Heart right ventricle (tissue), 16 donors: ENCODE measurements at regions of chr19 and their contacts with region 1.

Region 1: DNA sequence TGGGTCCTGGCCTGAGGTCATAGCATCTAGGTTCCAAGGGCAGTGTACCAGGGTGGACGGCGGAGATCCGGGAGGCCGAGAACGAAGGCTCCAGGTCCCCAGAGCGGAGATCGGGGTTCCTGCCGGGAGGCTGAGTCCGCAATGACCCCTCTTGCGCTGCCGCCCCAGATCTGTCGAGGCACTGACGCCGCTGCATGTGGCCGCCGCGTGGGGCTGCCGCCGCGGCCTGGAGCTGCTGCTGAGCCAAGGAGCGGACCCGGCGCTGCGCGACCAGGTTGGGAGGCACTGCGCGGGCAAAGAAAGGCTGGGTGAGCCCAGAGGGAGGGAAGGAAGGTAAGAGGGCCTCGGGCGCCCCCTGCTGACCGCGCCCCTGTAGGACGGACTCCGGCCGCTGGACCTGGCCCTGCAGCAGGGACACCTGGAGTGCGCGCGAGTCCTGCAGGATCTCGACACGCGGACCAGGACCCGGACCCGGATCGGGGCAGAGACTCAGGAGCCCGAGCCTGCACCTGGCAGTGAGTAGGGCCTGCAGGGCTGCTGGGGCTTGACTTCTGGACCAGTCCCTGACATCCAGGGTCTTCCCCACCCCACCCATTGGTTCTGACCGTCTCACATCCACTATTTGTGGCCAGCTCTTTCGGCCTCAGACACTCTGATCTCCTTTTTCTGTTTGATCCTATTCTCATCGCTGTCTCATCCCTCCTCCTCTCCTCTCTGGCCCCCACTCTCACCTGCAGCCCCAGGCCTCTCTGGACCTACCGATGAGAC is 971 bp downstream of the ANKLE1 start:
- DNase-seq: peak; percentile 78 to 86
- ATAC-seq: peak; percentile 89 to 97 (median 94)
- H3K4me3 ChIP-seq: peak overlapping the region; percentile 6 to 56 (median 42)
- H3K27ac ChIP-seq: no peak overlapping the region
- H3K4me1 ChIP-seq: peaks cover 13 to 19% (median 16%) of the 10 kb centered on the region in 9 donors
- H3K27me3 ChIP-seq: peaks cover 11 to 21% (median 16%) of the 10 kb centered on the region in 7 donors
- CTCF ChIP-seq: peak; percentile 89 to 98 (median 95)

Region 2: GRCh38 chr19:17069218-17069617 is 213.5 kb before region 1 on chr19:
- intact Hi-C with region 1: loop called (anchors 1 to 5 kb)
- DNase-seq: no peak
- ATAC-seq: no peak
- H3K4me3 ChIP-seq: no peak overlapping the region
- H3K27ac ChIP-seq: no peak overlapping the region
- H3K4me1 ChIP-seq: peaks cover 0 to 30% (median 18%) of the 10 kb centered on the region in 9 donors
- H3K27me3 ChIP-seq: no peaks in the 10 kb centered on the region
- CTCF ChIP-seq: no peak

Region 3: DNA sequence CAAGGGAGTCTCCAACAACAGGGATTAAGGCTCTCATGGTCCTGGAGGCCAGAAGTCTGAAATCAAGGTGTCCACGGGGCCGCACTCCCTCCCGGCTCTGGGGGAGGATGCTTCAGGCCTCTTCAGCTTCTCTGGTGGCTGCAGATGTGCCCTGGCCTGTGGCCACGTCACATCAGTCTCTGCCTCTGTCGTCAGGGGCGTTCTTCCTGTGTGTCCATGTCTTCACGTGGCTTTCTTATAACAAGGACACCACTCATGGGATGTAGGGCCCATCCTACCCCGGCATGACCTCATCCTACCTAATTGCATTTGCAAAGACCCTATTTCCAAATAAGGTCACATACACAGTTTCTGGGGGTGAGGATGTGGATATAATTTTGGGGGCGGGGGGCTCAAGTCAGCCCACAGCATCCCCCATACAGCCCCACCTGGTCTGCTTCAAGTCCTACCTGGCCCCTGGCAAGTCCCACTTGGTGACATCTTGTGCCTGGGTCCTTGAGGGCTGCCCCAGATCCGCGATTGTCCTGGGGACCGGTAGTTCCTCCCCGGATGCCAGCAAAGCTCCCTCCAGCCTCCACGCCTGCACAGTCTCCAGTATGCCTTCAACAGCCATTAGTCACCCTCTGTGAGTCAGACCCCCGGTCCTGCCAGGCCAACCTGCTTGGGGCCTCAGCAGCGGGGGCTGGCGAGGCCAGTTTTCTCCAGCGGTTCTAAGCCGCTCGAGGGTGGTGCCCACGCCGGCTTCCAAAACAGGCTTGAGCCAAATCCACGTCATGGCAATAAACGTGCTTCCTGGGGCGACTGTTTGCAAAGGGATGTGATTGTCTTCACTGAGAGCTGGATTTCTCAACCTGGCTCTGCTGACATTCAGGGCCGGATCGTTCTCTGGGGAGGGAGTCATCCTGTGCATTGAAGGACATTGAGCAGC is 174.9 kb before region 1 on chr19:
- intact Hi-C with region 1: no loop called
- DNase-seq: peak; percentile 80 to 83
- ATAC-seq: peak; percentile 68 to 96 (median 88)
- H3K4me3 ChIP-seq: peak overlapping the region in 3 of 10 donors; percentile 1 to 8 (median 8)
- H3K27ac ChIP-seq: peak overlapping the region; percentile 3 to 83 (median 73)
- H3K4me1 ChIP-seq: peaks cover 5 to 78% (median 28%) of the 10 kb centered on the region in 9 donors
- H3K27me3 ChIP-seq: no peaks in the 10 kb centered on the region
- CTCF ChIP-seq: no peak

Region 4: DNA sequence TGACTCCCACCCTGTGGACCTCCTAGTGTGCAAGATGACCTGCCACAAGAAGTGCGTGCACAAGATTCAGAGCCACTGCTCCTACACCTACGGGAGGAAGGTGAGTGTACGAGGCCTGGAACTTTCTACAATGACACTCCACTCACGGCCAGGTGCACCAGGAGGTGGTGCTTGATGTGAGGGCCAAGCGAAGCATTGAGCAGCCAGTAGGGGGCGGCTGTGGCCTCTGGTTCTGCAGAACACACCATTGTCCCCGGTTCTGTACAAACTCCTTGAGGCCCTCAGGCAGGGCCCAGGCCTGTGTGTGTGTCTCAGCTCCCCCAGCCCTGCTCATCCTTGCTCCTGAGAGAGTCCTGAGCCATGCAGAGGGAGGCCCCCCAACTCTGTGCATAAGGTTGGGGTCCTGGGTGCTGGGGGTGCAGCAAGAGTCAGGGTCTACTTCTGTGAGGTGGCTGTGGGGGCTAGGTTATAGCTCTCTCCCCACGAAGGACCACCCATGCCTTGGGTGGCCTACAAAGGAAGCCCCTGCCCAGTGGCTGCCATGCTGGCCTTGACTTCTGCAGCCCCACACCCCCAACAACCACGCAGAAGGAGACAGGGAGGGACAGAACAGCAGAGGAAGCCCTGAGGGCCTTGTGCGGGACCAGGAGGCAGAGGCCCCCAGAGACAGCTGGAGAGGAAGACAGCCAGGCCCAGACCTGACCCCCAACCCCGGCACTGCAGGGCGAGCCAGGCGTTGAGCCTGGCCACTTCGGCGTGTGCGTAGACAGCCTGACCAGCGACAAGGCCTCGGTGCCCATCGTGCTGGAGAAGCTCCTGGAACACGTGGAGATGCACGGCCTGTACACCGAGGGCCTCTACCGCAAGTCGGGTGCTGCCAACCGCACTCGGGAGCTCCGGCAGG is 77.2 kb before region 1 on chr19:
- intact Hi-C with region 1: loop called (anchors 2 to 10 kb)
- DNase-seq: peak; percentile 37 to 64
- ATAC-seq: peak in 7 of 8 donors; percentile 34 to 74 (median 54)
- H3K4me3 ChIP-seq: no peak overlapping the region
- H3K27ac ChIP-seq: no peak overlapping the region
- H3K4me1 ChIP-seq: no peaks in the 10 kb centered on the region
- H3K27me3 ChIP-seq: no peaks in the 10 kb centered on the region
- CTCF ChIP-seq: peak; percentile 35 to 74 (median 65)

Region 5: DNA sequence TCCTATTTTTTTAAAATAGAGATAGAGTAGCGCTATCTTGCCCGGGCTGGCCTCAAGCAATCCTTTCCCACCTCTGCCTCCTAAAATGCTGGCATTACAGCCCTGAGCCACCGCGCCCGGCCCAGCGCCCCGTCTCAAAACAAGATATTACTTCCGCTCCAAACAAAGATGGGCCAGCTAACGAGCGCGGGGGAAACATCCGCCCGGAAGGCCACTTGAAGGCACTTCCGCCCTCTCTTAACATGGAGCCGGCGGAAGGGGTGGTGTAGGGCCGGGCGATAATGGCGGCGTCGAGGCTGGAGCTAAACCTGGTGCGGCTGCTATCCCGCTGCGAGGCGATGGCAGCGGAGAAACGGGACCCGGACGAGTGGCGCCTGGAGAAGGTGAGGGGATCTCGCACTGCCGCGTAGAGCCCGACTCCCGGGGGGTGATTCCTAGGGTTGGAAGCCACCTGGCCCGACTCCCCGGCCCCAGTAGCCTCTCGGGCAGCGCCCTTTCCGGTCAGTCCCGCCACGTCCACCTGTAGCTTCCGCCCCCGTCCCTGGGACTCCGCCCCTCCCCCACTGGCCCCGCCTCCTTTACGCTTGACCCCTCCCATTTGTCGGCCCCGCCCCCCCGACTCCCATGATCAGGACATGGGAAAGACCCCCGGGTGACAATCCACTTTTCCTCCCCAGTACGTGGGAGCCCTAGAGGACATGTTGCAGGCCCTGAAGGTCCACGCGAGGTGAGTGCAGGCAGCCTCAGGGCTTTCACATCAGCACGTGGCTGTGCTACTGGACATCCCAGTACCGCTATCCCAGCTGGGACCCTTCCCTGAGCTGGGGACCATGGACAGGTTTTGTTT is 67.3 kb before region 1 on chr19 and contains the start of gene USE1:
- intact Hi-C with region 1: loop called in 1 of 10 experiments (anchors 10 kb)
- DNase-seq: peak; percentile 90 to 92
- ATAC-seq: peak; percentile 93 to 98 (median 96)
- H3K4me3 ChIP-seq: peak within 1 kb of the TSS; percentile 47 to 80 (median 64)
- H3K27ac ChIP-seq: peak within 1 kb of the TSS; percentile 80 to 97 (median 94)
- H3K4me1 ChIP-seq: peaks cover 0 to 21% (median 13%) of the 10 kb centered on the region in 9 donors
- H3K27me3 ChIP-seq: no peaks in the 10 kb centered on the region
- CTCF ChIP-seq: no peak
- total RNA-seq, gene USE1: 25.1 to 36.6 (median 28.3) TPM

Region 6: GRCh38 chr19:17260842-17261325 is 21.8 kb before region 1 on chr19:
- intact Hi-C with region 1: loop called in 1 of 10 experiments (anchors 2 kb)
- DNase-seq: peak; percentile 77 to 86
- ATAC-seq: peak; percentile 67 to 86 (median 80)
- H3K4me3 ChIP-seq: peak overlapping the region in 2 of 10 donors; percentile 11 to 63
- H3K27ac ChIP-seq: no peak overlapping the region
- H3K4me1 ChIP-seq: peaks cover 0 to 34% (median 5%) of the 10 kb centered on the region in 9 donors
- H3K27me3 ChIP-seq: no peaks in the 10 kb centered on the region
- CTCF ChIP-seq: peak; percentile 82 to 96 (median 87)

Region 7: DNA sequence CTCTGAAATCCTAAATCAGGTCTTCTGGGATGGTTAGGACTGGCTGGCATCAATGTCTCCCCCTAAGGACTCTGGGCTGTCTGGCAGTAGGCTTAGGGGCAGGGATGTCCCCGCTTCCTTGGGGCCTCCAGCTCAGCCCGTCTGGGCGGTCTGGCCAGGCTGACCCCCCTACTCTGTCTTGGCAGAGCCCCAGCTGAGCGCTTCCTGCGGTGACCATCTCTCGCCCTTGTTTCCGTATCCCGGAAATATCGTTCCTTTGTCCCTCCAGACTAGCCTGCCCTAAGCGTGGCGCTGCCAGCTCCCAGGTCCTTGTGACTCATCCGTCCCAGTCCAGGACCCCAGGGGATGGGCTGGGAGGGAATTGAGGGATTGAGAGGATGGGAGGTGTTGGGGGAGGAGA is 66.0 kb after region 1 on chr19:
- intact Hi-C with region 1: no loop called
- DNase-seq: peak; percentile 77 to 80
- ATAC-seq: peak; percentile 58 to 85 (median 77)
- H3K4me3 ChIP-seq: peak overlapping the region in 2 of 10 donors; percentile 10 to 26
- H3K27ac ChIP-seq: peak overlapping the region in 9 of 10 donors; percentile 56 to 86 (median 76)
- H3K4me1 ChIP-seq: peaks cover 20 to 74% (median 50%) of the 10 kb centered on the region in 9 donors
- H3K27me3 ChIP-seq: peaks cover 0 to 19% (median 0%) of the 10 kb centered on the region in 7 donors
- CTCF ChIP-seq: no peak

Region 8: GRCh38 chr19:17370026-17370587 is 87.4 kb after region 1 on chr19:
- intact Hi-C with region 1: no loop called
- DNase-seq: no peak
- ATAC-seq: peak in 6 of 8 donors; percentile 39 to 76 (median 60)
- H3K4me3 ChIP-seq: no peak overlapping the region
- H3K27ac ChIP-seq: peak overlapping the region in 1 of 10 donors; percentile 49
- H3K4me1 ChIP-seq: peaks cover 0 to 13% (median 0%) of the 10 kb centered on the region in 9 donors
- H3K27me3 ChIP-seq: no peaks in the 10 kb centered on the region
- CTCF ChIP-seq: no peak